CD4-positive, alpha-beta T cell (primary cell): ENCODE measurements at regions of chr20 and their contacts with region 1.

Region 1: DNA sequence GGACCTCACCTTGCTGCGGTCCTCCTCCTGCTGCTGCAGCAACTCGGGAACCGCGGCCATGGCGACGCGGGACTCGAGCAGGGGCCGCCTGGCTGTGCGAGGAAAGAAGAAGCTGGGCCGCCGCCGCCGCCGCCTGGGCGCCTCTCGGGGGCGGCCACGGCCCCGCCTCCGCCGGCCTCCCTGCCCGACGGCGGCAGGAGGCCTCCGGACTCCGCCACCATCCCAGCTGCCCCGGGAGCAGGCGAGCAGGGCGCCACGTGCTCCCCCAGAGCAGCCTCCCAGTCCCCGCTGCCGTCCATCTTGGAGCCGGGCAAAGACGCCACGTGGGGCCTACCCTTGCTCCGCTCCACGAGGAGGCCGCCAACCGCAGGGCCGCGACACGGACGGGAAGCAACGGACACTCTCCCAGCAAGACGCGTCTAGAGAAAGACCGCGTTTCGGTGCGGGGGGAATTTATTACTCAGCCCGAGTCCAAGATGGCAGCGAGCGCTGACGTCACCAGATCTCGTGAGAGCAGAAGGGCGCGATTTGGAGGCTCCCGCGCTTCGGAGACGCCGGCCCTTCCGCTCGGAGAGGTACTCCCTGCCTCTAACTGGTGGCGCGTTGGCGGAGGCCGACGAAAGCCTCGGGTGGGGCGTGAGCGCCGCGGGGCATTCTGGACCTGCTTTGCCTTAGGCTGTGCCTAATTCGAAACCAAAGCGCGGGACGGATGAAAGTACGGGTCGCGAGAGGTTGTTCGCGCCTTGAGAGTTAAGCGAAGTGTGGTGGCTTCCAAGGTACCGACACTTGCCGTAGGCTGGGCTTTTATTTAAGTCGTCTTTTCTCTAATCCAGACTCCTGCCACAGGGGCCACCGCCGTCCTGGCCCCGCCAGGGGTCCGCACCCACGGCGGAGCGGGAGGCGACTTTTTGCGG is at the starts of genes MGME1 and SNX5:
- DNase-seq: peak; percentile 96 to 100 (median 98)
- ATAC-seq: peak; percentile 91
- H3K4me3 ChIP-seq: peak within 1 kb of the TSS; percentile 69
- H3K4me3 Mint-ChIP-seq: peak within 1 kb of the TSS; percentile 97
- H3K27ac ChIP-seq: peak within 1 kb of the TSS; percentile 92 to 99
- H3K27ac Mint-ChIP-seq: peak within 1 kb of the TSS; percentile 92
- H3K4me1 ChIP-seq: peaks cover 46% of the 10 kb centered on the region
- H3K4me1 Mint-ChIP-seq: peaks cover 82% of the 10 kb centered on the region
- H3K27me3 ChIP-seq: no peaks in the 10 kb centered on the region
- H3K27me3 Mint-ChIP-seq: no peaks in the 10 kb centered on the region
- CTCF ChIP-seq: no peak
- total RNA-seq, gene MGME1: 4.5 to 4.6 TPM
- total RNA-seq, gene SNX5: 58.3 to 60.3 TPM

Region 2: DNA sequence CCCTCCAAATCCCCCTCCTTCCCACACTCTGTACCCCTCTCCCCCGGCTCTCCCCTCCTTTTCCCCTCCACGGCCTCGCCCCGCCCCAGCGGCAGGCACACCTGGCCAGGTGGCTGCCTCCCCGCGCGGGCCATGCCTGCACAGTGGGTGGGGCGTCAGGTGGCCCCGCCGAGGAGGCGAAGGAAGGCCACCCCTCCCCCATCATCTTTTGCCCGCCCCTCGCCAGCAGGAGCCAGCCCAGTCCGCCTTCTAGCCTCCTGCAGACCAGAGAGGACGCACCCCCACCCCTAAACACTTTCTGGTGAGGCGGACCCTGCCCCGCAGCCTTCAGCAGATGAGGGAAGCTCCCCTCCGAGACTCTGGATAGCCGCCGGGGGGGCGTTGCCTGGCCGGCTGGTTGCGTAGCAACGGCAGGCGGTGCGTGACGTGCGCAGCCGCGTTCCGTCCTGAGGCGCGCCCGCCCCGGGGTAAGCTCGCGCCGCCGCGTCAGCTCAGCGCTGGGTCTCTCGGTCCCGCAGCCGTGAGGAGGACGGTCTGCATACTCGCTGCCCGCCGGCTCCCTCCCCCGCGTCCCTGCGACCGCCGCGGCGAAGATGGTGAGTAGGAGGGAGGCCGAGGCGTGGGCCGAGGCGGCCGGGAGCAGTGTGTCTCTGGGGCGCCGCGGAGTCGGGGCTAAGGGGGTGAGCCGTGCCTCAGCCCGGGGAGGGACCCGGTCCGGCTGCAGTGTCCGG is 398.8 kb before region 1 on chr20 and contains the start of gene DSTN:
- CTCF ChIA-PET with region 1: no interaction called
- POLR2A ChIA-PET with region 1: interaction called, 5 read pairs
- intact Hi-C with region 1: loop called in 1 of 2 experiments (anchors 5 kb)
- DNase-seq: peak; percentile 75 to 95 (median 82)
- ATAC-seq: peak; percentile 87
- H3K4me3 ChIP-seq: peak within 1 kb of the TSS; percentile 85
- H3K4me3 Mint-ChIP-seq: peak within 1 kb of the TSS; percentile 96
- H3K27ac ChIP-seq: peak within 1 kb of the TSS; percentile 53 to 55
- H3K27ac Mint-ChIP-seq: peak within 1 kb of the TSS; percentile 72
- H3K4me1 ChIP-seq: peaks cover 17% of the 10 kb centered on the region
- H3K4me1 Mint-ChIP-seq: peaks cover 34% of the 10 kb centered on the region
- H3K27me3 ChIP-seq: no peaks in the 10 kb centered on the region
- H3K27me3 Mint-ChIP-seq: no peaks in the 10 kb centered on the region
- CTCF ChIP-seq: no peak
- total RNA-seq, gene DSTN: 36.0 to 38.9 TPM

Region 3: GRCh38 chr20:17958373-17959256 is 10.0 kb before region 1 on chr20:
- CTCF ChIA-PET with region 1: interaction called, 13 read pairs
- POLR2A ChIA-PET with region 1: interaction called, 20 read pairs
- intact Hi-C with region 1: no loop called
- DNase-seq: no peak
- ATAC-seq: no peak
- H3K4me3 ChIP-seq: no peak overlapping the region
- H3K4me3 Mint-ChIP-seq: peak overlapping the region; percentile 16
- H3K27ac ChIP-seq: peak overlapping the region in 1 of 2 donors; percentile 63
- H3K27ac Mint-ChIP-seq: peak overlapping the region; percentile 60
- H3K4me1 ChIP-seq: peaks cover 61% of the 10 kb centered on the region
- H3K4me1 Mint-ChIP-seq: peaks cover 75% of the 10 kb centered on the region
- H3K27me3 ChIP-seq: no peaks in the 10 kb centered on the region
- H3K27me3 Mint-ChIP-seq: no peaks in the 10 kb centered on the region
- CTCF ChIP-seq: no peak

Region 4: GRCh38 chr20:18137412-18138265 is 169.0 kb after region 1 on chr20 and contains the starts of genes KAT14 and PET117:
- CTCF ChIA-PET with region 1: interaction called, 3 read pairs
- POLR2A ChIA-PET with region 1: interaction called, 7 read pairs
- intact Hi-C with region 1: loop called (anchors 1 to 2 kb)
- DNase-seq: peak; percentile 83 to 96 (median 91)
- ATAC-seq: peak; percentile 92
- H3K4me3 ChIP-seq: peak within 1 kb of the TSS; percentile 81
- H3K4me3 Mint-ChIP-seq: peak within 1 kb of the TSS; percentile 96
- H3K27ac ChIP-seq: peak within 1 kb of the TSS; percentile 72 to 75
- H3K27ac Mint-ChIP-seq: peak within 1 kb of the TSS; percentile 95
- H3K4me1 ChIP-seq: peaks cover 32% of the 10 kb centered on the region
- H3K4me1 Mint-ChIP-seq: peaks cover 32% of the 10 kb centered on the region
- H3K27me3 ChIP-seq: no peaks in the 10 kb centered on the region
- H3K27me3 Mint-ChIP-seq: no peaks in the 10 kb centered on the region
- CTCF ChIP-seq: no peak
- total RNA-seq, gene KAT14: 8.5 to 9.4 TPM
- total RNA-seq, gene PET117: 13.6 to 14.6 TPM

Region 5: DNA sequence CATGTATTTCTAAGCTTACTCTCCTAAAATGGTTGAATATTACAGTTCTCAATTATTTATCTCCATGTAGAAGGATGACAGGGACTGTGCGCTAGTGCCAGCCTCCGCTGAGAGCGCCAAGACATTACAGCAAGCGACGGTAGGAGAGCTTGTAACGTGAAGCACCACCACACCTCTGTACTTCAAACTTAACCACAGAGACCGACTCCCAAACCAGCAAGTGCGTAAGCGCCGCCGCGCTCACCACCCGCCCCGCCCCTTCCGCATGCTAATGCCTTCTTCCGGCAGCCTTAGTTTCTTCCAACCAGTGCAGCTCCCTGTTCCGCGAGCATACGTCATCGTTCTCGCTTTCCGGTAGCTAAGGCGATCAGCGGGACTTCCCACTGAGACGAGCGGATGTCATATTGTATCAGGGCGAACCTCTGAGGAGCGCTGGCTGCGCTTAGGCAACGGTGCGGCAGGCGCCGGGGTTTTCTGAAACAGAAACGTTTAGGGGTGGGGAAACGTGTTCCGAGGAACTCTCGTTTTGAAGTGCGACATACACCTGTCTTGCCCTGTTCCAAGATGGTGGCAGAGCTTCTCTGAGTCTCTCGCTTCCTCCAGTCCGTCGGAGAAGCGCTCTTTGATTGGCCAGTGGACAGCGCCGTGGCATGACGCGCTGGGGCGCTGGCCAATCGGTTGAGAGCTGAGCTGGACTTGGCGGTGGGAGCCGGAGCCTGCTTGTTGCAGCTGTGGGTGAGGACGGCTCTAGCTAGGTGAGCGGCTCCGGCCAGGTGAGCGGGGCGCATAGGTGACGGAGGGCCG is 538.8 kb after region 1 on chr20 and contains the start of gene SEC23B:
- CTCF ChIA-PET with region 1: no interaction called
- POLR2A ChIA-PET with region 1: interaction called, 29 read pairs
- intact Hi-C with region 1: loop called in 1 of 2 experiments (anchors 10 kb)
- DNase-seq: peak; percentile 94 to 99 (median 98)
- ATAC-seq: peak; percentile 81
- H3K4me3 ChIP-seq: peak within 1 kb of the TSS; percentile 86
- H3K4me3 Mint-ChIP-seq: peak within 1 kb of the TSS; percentile 98
- H3K27ac ChIP-seq: peak within 1 kb of the TSS; percentile 94 to 99
- H3K27ac Mint-ChIP-seq: peak within 1 kb of the TSS; percentile 100
- H3K4me1 ChIP-seq: peaks cover 26% of the 10 kb centered on the region
- H3K4me1 Mint-ChIP-seq: peaks cover 52% of the 10 kb centered on the region
- H3K27me3 ChIP-seq: peaks cover 0 to 2% of the 10 kb centered on the region in 2 experiments
- H3K27me3 Mint-ChIP-seq: no peaks in the 10 kb centered on the region
- CTCF ChIP-seq: no peak
- total RNA-seq, gene SEC23B: 29.2 to 32.8 TPM

Region 6: DNA sequence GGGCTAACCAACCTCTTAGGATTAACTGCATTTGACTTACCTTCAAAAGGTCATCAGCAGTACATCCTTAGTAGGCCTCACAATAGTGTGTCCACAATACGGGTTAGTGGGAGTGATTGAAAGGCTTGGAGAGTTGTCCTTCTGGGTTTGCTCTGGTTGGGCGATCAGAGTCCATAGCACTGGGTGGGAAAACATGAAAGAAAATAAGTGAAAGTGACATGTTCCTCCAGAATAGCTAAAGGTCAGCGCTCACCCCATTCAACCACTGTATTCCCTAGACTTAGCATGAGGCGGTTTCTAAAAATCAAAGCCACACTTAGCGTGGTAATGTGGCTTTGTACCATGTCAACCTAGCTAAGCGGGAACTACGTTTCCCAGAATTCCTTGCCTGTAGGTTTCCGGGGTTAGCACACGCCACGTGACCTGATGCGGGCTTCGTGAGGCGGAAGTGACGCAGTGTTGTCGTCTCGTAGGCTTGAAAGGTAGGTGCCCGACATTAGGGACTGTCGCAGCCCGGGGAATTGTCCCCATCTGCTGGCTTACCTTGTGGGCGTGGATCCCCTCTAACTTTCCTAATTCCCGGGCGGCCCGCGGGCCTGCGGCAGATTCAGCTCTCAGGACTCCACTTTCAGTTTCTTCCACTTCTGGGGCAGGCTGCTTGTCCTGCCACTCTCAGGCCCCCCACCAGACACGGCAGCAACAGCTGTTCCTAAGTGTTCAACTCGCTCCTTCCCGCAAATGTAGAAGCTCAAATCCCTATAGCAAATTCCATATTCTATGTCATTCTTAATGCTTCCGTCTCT is 825.2 kb after region 1 on chr20:
- CTCF ChIA-PET with region 1: no interaction called
- POLR2A ChIA-PET with region 1: no interaction called
- intact Hi-C with region 1: loop called in 1 of 2 experiments (anchors 10 kb)
- DNase-seq: peak; percentile 75 to 98 (median 82)
- ATAC-seq: peak; percentile 96
- H3K4me3 ChIP-seq: peak overlapping the region; percentile 75
- H3K4me3 Mint-ChIP-seq: peak overlapping the region; percentile 92
- H3K27ac ChIP-seq: peak overlapping the region; percentile 85 to 93
- H3K27ac Mint-ChIP-seq: peak overlapping the region; percentile 100
- H3K4me1 ChIP-seq: peaks cover 11% of the 10 kb centered on the region
- H3K4me1 Mint-ChIP-seq: peaks cover 28% of the 10 kb centered on the region
- H3K27me3 ChIP-seq: peaks cover 0 to 13% of the 10 kb centered on the region in 2 experiments
- H3K27me3 Mint-ChIP-seq: peaks cover 40% of the 10 kb centered on the region
- CTCF ChIP-seq: no peak